ENCODE measurements at regions of chr5 and their contacts with region 1.

Region 1: DNA sequence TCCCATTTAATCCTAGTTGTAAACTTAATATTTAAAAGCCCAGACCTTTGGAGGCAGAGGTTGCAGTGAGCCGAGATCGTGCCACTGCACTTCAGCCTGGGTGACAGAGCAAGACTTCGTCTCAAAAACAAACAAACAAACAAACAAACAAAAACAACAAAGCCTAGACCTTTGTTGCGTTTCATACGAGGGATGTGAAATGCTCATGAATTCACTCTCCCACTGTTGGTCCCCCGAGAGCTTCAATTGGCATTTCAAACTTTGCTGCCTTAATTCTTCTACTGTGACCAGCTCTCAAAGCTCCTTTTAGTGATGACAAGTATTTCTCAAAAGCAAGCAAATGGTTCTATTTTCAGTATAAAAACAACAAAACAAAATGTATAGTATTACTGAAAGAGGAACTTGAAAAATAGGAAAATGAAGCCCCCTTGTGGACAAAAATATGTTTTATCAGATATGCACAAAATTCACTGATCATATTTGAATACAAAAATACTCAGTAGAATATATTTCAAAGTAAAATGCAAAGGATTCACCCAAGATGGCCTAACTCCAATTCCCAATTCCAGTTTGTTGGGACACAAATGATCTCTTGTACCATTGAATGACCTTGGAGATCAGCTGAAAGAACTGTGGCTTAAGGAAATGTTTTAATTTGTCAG is 140.4 kb downstream of the ESM1 start:
- DNase-seq: peak in 1 of 2 experiments; percentile 18
- H3K4me3 ChIP-seq: no peak overlapping the region
- H3K4me3 Mint-ChIP-seq: no peak overlapping the region
- H3K27ac Mint-ChIP-seq: no peak overlapping the region
- H3K4me1 ChIP-seq: no peaks in the 10 kb centered on the region
- H3K4me1 Mint-ChIP-seq: no peaks in the 10 kb centered on the region
- H3K27me3 ChIP-seq: no peaks in the 10 kb centered on the region
- H3K27me3 Mint-ChIP-seq: peaks cover 11% of the 10 kb centered on the region
- CTCF ChIP-seq: peak; percentile 41 to 50

Region 2: GRCh38 chr5:54243473-54244080 is 601.5 kb before region 1 on chr5:
- CTCF ChIA-PET with region 1: no interaction called
- POLR2A ChIA-PET with region 1: no interaction called
- intact Hi-C with region 1: loop called (anchors 1 kb)
- DNase-seq: peak in 1 of 2 experiments; percentile 62
- H3K4me3 ChIP-seq: no peak overlapping the region
- H3K4me3 Mint-ChIP-seq: no peak overlapping the region
- H3K27ac Mint-ChIP-seq: no peak overlapping the region
- H3K4me1 ChIP-seq: 0 out of 2 replicates have a peak, but pooled peaks cover 9% of the 10 kb centered on the region
- H3K4me1 Mint-ChIP-seq: peaks cover 10% of the 10 kb centered on the region
- H3K27me3 ChIP-seq: no peaks in the 10 kb centered on the region
- H3K27me3 Mint-ChIP-seq: no peaks in the 10 kb centered on the region
- CTCF ChIP-seq: peak; percentile 78 to 83

Region 3: DNA sequence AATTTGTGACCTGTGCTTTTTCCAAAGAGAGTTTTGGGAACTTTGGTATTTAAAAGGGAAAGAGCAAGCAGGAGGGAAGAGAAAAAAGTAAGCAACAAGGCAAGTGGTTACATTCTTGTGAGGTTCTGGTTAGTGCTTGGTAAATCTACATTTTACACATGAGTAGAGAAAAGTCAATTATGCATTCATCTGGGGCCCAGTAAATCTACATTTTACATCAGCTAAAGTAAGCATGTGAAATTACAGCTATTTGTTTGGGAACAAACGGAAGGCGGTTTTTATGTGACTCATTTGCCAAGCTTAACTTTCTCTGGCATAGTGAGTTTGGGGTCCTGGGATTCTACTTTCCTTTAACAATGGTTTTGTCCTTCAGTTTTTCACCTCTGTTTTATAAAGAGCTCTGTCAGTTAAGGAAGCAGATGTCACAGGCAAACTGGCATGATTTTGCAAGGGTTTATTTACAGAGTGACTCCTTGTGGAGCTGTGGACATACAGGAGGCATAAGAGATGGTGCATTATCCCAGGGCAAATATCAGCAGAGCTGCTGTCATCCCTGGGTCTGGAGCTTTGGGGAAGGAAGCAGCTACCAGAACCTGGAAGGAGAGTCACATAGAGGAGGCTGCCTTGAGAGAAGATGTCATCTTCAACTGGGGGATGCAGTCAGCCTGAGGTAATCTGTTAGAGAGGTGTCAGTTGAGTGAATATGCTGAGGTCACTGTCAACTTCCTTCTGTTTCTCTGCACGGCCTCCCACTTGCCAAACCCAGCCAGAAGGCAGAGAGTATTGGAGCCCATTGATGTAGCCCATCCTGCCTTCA is 225.1 kb before region 1 on chr5:
- CTCF ChIA-PET with region 1: no interaction called
- POLR2A ChIA-PET with region 1: no interaction called
- intact Hi-C with region 1: loop called (anchors 10 kb)
- DNase-seq: no peak
- H3K4me3 ChIP-seq: no peak overlapping the region
- H3K4me3 Mint-ChIP-seq: no peak overlapping the region
- H3K27ac Mint-ChIP-seq: no peak overlapping the region
- H3K4me1 ChIP-seq: no peaks in the 10 kb centered on the region
- H3K4me1 Mint-ChIP-seq: no peaks in the 10 kb centered on the region
- H3K27me3 ChIP-seq: no peaks in the 10 kb centered on the region
- H3K27me3 Mint-ChIP-seq: no peaks in the 10 kb centered on the region
- CTCF ChIP-seq: no peak

Region 4: GRCh38 chr5:54761213-54761701 is 83.8 kb before region 1 on chr5:
- CTCF ChIA-PET with region 1: no interaction called
- POLR2A ChIA-PET with region 1: no interaction called
- intact Hi-C with region 1: loop called (anchors 10 kb)
- DNase-seq: no peak
- H3K4me3 ChIP-seq: no peak overlapping the region
- H3K4me3 Mint-ChIP-seq: no peak overlapping the region
- H3K27ac Mint-ChIP-seq: no peak overlapping the region
- H3K4me1 ChIP-seq: no peaks in the 10 kb centered on the region
- H3K4me1 Mint-ChIP-seq: no peaks in the 10 kb centered on the region
- H3K27me3 ChIP-seq: no peaks in the 10 kb centered on the region; the same call in 1 of the 2 replicates
- H3K27me3 Mint-ChIP-seq: no peaks in the 10 kb centered on the region
- CTCF ChIP-seq: no peak

Region 5: DNA sequence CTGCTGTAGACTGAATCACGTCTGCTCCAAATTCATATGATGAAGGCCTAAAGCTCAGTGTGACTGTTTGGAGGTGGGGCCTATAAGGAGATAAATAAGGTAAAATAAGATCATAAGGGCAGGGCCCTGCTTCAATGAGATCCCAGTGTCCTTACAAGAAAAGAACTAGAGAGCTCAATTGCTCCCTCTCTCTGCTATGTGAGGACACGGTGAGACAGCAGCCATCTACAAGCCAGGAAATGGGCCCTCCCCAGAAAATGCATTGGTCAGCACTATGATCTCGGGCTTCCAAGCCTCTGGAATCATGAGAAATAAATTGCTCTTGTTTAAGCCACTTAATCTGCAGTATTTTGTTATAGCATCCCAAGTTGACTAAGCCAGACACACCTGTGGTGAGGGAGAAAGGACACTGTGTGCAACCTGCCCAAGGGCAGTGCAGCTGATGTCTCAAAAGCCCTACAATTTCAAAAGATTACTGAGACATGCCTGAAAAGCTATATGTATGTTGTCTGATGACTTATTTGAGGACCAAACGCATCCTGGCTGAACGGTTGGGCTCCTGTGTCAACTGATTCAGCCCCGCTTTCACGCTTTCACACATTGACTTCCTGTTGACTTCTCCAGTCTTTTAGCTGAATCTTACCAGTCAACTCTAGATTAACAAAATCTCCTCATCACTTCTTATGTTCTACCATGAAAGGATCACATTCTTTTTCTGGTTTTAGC is 192.2 kb after region 1 on chr5:
- CTCF ChIA-PET with region 1: no interaction called
- POLR2A ChIA-PET with region 1: no interaction called
- intact Hi-C with region 1: no loop called
- DNase-seq: no peak
- H3K4me3 ChIP-seq: no peak overlapping the region
- H3K4me3 Mint-ChIP-seq: no peak overlapping the region
- H3K27ac Mint-ChIP-seq: no peak overlapping the region
- H3K4me1 ChIP-seq: no peaks in the 10 kb centered on the region
- H3K4me1 Mint-ChIP-seq: no peaks in the 10 kb centered on the region
- H3K27me3 ChIP-seq: no peaks in the 10 kb centered on the region
- H3K27me3 Mint-ChIP-seq: no peaks in the 10 kb centered on the region
- CTCF ChIP-seq: no peak

Region 6: GRCh38 chr5:55062039-55062779 is 217.2 kb after region 1 on chr5:
- CTCF ChIA-PET with region 1: no interaction called
- POLR2A ChIA-PET with region 1: no interaction called
- intact Hi-C with region 1: no loop called
- DNase-seq: no peak
- H3K4me3 ChIP-seq: no peak overlapping the region
- H3K4me3 Mint-ChIP-seq: no peak overlapping the region
- H3K27ac Mint-ChIP-seq: no peak overlapping the region
- H3K4me1 ChIP-seq: no peaks in the 10 kb centered on the region
- H3K4me1 Mint-ChIP-seq: no peaks in the 10 kb centered on the region
- H3K27me3 ChIP-seq: no peaks in the 10 kb centered on the region
- H3K27me3 Mint-ChIP-seq: peaks cover 32% of the 10 kb centered on the region
- CTCF ChIP-seq: no peak

Measured in Caco-2 (cell line).